Esophagus muscularis mucosa (tissue), 4 donors: ENCODE measurements at regions of chr5 and their contacts with region 1.

Region 1: DNA sequence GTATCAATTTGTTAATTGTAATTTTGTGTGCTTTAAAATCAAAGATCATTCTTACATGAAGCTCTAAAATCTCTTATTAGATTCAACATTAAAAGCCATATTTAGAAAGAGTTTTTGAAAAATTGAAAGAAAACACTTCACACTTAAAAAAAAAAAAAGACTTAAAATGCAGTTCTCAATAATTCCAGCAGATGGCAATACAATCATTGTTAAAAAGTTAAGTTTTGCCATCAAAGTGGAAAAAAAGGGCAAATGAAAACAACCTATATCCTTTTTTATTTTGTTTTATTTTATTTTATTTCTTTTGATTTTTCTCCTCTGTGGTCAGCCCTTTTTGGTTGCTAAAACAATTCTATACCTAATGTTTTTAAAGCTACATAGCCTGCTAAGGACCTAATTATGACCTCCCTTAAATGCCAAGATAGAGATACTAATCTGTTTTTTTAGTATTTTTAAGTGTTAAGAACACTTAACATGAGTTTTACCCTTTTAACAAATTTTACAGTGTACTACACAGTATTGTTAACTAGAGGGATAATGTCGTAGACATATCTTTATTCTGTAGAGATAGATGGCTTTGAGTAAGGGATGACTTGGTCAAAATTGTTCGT is 154.2 kb upstream of the DAB2 start:
- DNase-seq: no peak
- H3K4me3 ChIP-seq: no peak overlapping the region
- H3K27ac ChIP-seq: no peak overlapping the region
- H3K4me1 ChIP-seq: no peaks in the 10 kb centered on the region
- H3K27me3 ChIP-seq: peaks cover 0 to 4% (median 0%) of the 10 kb centered on the region in 4 donors
- CTCF ChIP-seq: peak; percentile 36 to 77 (median 71)
- EP300 ChIP-seq: no peak
- POLR2A ChIP-seq: no peak

Region 2: GRCh38 chr5:40879163-40879942 is 1300.4 kb after region 1 on chr5:
- intact Hi-C with region 1: loop called (anchors 5 kb)
- DNase-seq: no peak
- H3K4me3 ChIP-seq: no peak overlapping the region
- H3K27ac ChIP-seq: no peak overlapping the region
- H3K4me1 ChIP-seq: no peaks in the 10 kb centered on the region
- H3K27me3 ChIP-seq: no peaks in the 10 kb centered on the region
- CTCF ChIP-seq: peak; percentile 49 to 67 (median 61)
- EP300 ChIP-seq: no peak
- POLR2A ChIP-seq: no peak